ENCODE measurements at regions of chr1 and their contacts with region 1.

Region 1: GRCh38 chr1:92317836-92318493 is 19.1 kb downstream of the RPAP2 start:
- DNase-seq: peak in 3 of 9 experiments; percentile 14 to 75 (median 62)
- ATAC-seq: peak; percentile 37
- H3K4me3 ChIP-seq: no peak overlapping the region
- H3K4me3 Mint-ChIP-seq: peak overlapping the region; percentile 64
- H3K27ac ChIP-seq: peak overlapping the region; percentile 12 to 47
- H3K27ac Mint-ChIP-seq: peak overlapping the region; percentile 91
- H3K4me1 ChIP-seq: peaks cover 58% of the 10 kb centered on the region
- H3K4me1 Mint-ChIP-seq: peaks cover 59% of the 10 kb centered on the region
- H3K27me3 ChIP-seq: no peaks in the 10 kb centered on the region
- H3K27me3 Mint-ChIP-seq: no peaks in the 10 kb centered on the region
- CTCF ChIP-seq: no peak

Region 2: GRCh38 chr1:92367496-92367895 is 49.5 kb after region 1 on chr1:
- CTCF ChIA-PET with region 1: interaction called, 4 read pairs
- POLR2A ChIA-PET with region 1: no interaction called
- intact Hi-C with region 1: loop called in 1 of 2 experiments (anchors 5 kb)
- DNase-seq: peak in 1 of 9 experiments; percentile 31
- ATAC-seq: peak; percentile 46
- H3K4me3 ChIP-seq: no peak overlapping the region
- H3K4me3 Mint-ChIP-seq: no peak overlapping the region
- H3K27ac ChIP-seq: no peak overlapping the region
- H3K27ac Mint-ChIP-seq: peak overlapping the region; percentile 19
- H3K4me1 ChIP-seq: peaks cover 36% of the 10 kb centered on the region
- H3K4me1 Mint-ChIP-seq: peaks cover 48% of the 10 kb centered on the region
- H3K27me3 ChIP-seq: no peaks in the 10 kb centered on the region
- H3K27me3 Mint-ChIP-seq: no peaks in the 10 kb centered on the region
- CTCF ChIP-seq: no peak

Region 3: GRCh38 chr1:92441697-92442342 is 123.9 kb after region 1 on chr1:
- CTCF ChIA-PET with region 1: no interaction called
- POLR2A ChIA-PET with region 1: no interaction called
- intact Hi-C with region 1: no loop called
- DNase-seq: no peak
- ATAC-seq: no peak
- H3K4me3 ChIP-seq: no peak overlapping the region
- H3K4me3 Mint-ChIP-seq: no peak overlapping the region
- H3K27ac ChIP-seq: no peak overlapping the region
- H3K27ac Mint-ChIP-seq: no peak overlapping the region
- H3K4me1 ChIP-seq: no peaks in the 10 kb centered on the region
- H3K4me1 Mint-ChIP-seq: peaks cover 1% of the 10 kb centered on the region
- H3K27me3 ChIP-seq: no peaks in the 10 kb centered on the region
- H3K27me3 Mint-ChIP-seq: no peaks in the 10 kb centered on the region
- CTCF ChIP-seq: no peak

Region 4: GRCh38 chr1:92583821-92584760 is 266.1 kb after region 1 on chr1:
- CTCF ChIA-PET with region 1: no interaction called
- POLR2A ChIA-PET with region 1: interaction called, 5 read pairs
- intact Hi-C with region 1: loop called in 1 of 2 experiments (anchors 5 kb)
- DNase-seq: peak in 2 of 9 experiments; percentile 57 to 76
- ATAC-seq: peak; percentile 92
- H3K4me3 ChIP-seq: peak overlapping the region in 1 of 2 experiments; percentile 18
- H3K4me3 Mint-ChIP-seq: peak overlapping the region; percentile 68
- H3K27ac ChIP-seq: peak overlapping the region; percentile 16 to 53
- H3K27ac Mint-ChIP-seq: peak overlapping the region; percentile 49
- H3K4me1 ChIP-seq: peaks cover 22% of the 10 kb centered on the region
- H3K4me1 Mint-ChIP-seq: peaks cover 57% of the 10 kb centered on the region
- H3K27me3 ChIP-seq: no peaks in the 10 kb centered on the region
- H3K27me3 Mint-ChIP-seq: no peaks in the 10 kb centered on the region
- CTCF ChIP-seq: no peak